ENCODE measurements at regions of chr7 and their contacts with region 1.

Region 1: GRCh38 chr7:93055543-93056107 is 62.2 kb downstream of the SAMD9 start:
- DNase-seq: no peak
- H3K4me3 ChIP-seq: no peak overlapping the region
- H3K27ac ChIP-seq: no peak overlapping the region
- H3K4me1 ChIP-seq: no peaks in the 10 kb centered on the region
- H3K27me3 ChIP-seq: no peaks in the 10 kb centered on the region
- CTCF ChIP-seq: peak; percentile 76 to 87 (median 76)
- EP300 ChIP-seq: no peak
- POLR2A ChIP-seq: no peak

Region 2: DNA sequence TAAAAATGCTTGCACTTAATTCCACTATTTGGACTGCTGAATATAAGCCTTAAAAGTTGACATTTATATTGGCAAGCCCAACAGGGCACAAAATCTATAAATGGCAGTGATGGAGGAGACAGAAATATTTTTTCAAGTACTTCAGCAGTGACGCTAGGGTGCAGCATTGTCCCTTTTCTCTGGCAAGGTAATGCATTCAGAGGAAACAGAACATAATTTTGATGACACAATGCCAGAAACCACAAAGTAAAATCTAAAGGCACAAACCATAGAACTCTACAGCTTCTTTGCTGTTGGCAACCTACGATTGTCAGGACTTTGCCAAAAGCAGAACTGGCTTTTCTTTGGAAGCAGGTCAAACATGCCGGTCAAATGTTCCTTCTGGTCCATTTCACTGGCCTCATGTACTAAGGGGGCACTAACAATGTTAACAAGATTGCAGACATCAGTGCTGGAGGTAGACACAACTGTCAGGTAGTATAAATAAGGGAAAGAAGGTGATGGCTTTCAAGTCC is 434.5 kb before region 1 on chr7:
- intact Hi-C with region 1: loop called (anchors 2 kb)
- DNase-seq: no peak
- H3K4me3 ChIP-seq: no peak overlapping the region
- H3K27ac ChIP-seq: peak overlapping the region; percentile 46 to 69 (median 57)
- H3K4me1 ChIP-seq: peaks cover 13 to 27% (median 24%) of the 10 kb centered on the region in 4 donors
- H3K27me3 ChIP-seq: no peaks in the 10 kb centered on the region
- CTCF ChIP-seq: peak; percentile 75 to 81 (median 80)
- EP300 ChIP-seq: no peak
- POLR2A ChIP-seq: no peak

Region 3: DNA sequence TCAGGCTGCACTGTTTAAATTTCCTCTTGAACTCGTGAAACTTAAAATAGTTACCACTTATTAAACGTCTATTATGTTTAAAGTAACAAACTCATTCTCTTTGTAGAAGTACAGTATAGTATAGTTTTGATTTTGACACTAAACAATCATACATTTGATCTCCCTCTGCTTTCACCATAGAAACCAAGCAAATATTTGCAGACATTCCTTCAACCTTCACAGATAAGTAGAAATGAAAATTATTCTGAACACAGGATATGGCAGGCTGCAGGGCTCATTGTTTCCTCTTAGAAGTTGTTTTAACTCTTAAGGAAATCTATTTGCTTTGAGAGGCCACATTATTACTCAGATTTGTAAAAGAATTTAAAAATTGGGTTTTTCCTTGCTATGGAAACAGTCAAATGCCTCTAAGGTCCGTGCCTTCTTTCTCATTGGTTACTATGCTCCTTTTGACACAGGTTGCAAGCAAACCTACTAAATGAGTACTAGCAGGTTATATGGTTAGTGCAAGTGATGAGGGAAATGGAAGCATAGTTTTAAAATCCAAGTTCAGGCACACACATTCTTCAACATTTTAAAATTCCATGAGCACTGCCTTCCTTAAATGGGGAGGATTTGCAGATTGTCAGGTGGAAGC is 372.6 kb before region 1 on chr7:
- intact Hi-C with region 1: loop called (anchors 10 kb)
- DNase-seq: no peak
- H3K4me3 ChIP-seq: no peak overlapping the region
- H3K27ac ChIP-seq: peak overlapping the region; percentile 53 to 65 (median 61)
- H3K4me1 ChIP-seq: peaks cover 34 to 60% (median 42%) of the 10 kb centered on the region in 4 donors
- H3K27me3 ChIP-seq: no peaks in the 10 kb centered on the region
- CTCF ChIP-seq: no peak
- EP300 ChIP-seq: no peak
- POLR2A ChIP-seq: no peak

Region 4: GRCh38 chr7:92843034-92843760 is 212.4 kb before region 1 on chr7:
- intact Hi-C with region 1: loop called (anchors 5 kb)
- DNase-seq: no peak
- H3K4me3 ChIP-seq: no peak overlapping the region
- H3K27ac ChIP-seq: no peak overlapping the region
- H3K4me1 ChIP-seq: no peaks in the 10 kb centered on the region
- H3K27me3 ChIP-seq: no peaks in the 10 kb centered on the region
- CTCF ChIP-seq: no peak
- EP300 ChIP-seq: no peak
- POLR2A ChIP-seq: no peak